Heart right ventricle (tissue), 16 donors: ENCODE measurements at regions of chr15 and their contacts with region 1.

Region 1: GRCh38 chr15:48352474-48353072 is 21.3 kb downstream of the DUT start:
- DNase-seq: peak in 1 of 2 donors; percentile 29
- ATAC-seq: peak in 7 of 8 donors; percentile 55 to 81 (median 76)
- H3K4me3 ChIP-seq: no peak overlapping the region
- H3K27ac ChIP-seq: no peak overlapping the region
- H3K4me1 ChIP-seq: peaks cover 0 to 9% (median 0%) of the 10 kb centered on the region in 9 donors
- H3K27me3 ChIP-seq: no peaks in the 10 kb centered on the region
- CTCF ChIP-seq: peak; percentile 52 to 89 (median 79)

Region 2: GRCh38 chr15:48800811-48801455 is 448.4 kb after region 1 on chr15:
- intact Hi-C with region 1: loop called in 7 of 10 experiments (anchors 5 to 10 kb)
- DNase-seq: no peak
- ATAC-seq: peak in 2 of 8 donors; percentile 49 to 53
- H3K4me3 ChIP-seq: no peak overlapping the region
- H3K27ac ChIP-seq: peak overlapping the region in 2 of 10 donors; percentile 7 to 8
- H3K4me1 ChIP-seq: peaks cover 0 to 24% (median 2%) of the 10 kb centered on the region in 9 donors
- H3K27me3 ChIP-seq: no peaks in the 10 kb centered on the region
- CTCF ChIP-seq: peak; percentile 7 to 67 (median 57)

Region 3: DNA sequence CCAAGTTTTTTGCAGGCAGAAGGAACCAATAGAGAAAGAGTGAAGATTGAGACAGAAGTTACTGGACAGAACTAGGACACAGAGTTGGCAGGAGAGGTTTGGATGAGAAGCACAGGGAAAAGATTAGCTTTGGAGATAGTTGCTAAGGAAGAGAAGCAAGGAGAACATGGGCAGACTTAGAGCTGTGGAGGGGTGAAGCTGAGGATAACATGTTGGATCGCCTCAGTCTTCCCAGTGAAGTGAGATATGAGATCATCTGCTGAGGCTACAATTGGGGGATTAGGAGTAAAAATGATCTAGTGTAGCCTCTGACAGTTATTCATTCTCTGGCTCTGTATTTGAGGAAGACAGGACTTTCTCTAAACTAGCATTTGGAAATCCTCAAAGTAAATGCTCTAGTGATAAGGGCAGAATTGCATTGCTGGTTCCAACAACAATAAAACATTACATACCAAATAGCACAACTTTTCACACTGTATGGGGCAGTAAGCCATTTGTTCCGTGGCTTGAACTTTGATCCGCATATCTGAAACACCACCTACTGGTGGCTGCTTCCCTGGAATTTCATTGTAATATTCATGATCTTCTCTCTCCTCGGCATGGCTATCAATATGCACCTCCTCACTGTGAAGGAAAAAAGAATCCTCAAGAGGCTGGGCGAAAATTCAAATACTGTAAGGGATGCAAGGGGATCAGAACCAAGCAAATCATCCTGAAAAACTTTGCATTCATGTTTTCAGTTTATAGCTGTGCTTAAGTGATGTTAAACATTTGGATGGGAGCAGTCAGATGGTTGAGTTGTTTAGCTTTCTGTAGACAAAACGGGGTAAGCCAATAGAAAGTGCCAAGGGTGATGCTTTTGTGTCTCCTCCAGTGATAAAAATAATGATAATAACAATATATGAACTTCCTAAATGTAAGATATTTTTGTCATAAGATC is 503.2 kb after region 1 on chr15:
- intact Hi-C with region 1: loop called in 2 of 10 experiments (anchors 5 to 10 kb)
- DNase-seq: peak in 1 of 2 donors; percentile 16
- ATAC-seq: peak in 7 of 8 donors; percentile 68 to 89 (median 80)
- H3K4me3 ChIP-seq: no peak overlapping the region
- H3K27ac ChIP-seq: peak overlapping the region in 1 of 10 donors; percentile 10
- H3K4me1 ChIP-seq: peaks cover 0 to 13% (median 0%) of the 10 kb centered on the region in 9 donors
- H3K27me3 ChIP-seq: no peaks in the 10 kb centered on the region
- CTCF ChIP-seq: peak in 7 of 9 donors; percentile 37 to 60 (median 49)